ENCODE measurements at regions of chr15 and their contacts with region 1.

Region 1: DNA sequence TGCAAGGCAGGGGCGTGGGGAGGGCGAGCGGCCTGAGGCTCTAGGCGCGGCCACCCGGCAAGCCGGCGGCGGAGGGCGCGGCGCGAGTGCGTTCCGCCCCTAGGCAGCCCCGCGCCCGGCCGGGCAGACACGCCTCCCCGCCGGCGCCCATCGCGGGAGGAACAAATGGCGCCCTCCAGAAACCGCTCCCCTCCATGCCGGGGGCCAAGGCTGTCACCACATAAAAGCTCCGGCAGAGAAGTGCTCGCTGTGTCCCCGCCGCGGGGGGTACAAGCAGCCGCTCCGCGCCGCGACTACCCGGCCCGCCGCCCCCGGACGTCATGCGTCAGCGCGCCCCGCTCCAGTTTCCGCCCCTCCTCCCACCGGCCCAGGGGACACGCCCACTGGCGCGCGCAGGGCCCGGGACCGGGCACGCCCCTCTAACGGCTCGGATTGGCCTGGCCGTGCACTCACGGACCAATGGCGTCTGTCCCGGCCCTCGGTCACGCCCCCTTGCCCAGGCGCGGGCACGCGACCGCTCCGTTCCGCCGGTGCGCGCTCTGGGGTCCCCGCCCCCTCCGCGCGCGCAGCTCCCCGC is 391 bp upstream of the KLF13 start:
- DNase-seq: peak; percentile 93 to 99
- H3K4me3 ChIP-seq: peak overlapping the region; percentile 74 to 90
- H3K27ac ChIP-seq: peak overlapping the region; percentile 95 to 99
- H3K4me1 ChIP-seq: peaks cover 5 to 27% of the 10 kb centered on the region in 2 donors
- H3K27me3 ChIP-seq: no peaks in the 10 kb centered on the region
- CTCF ChIP-seq: no peak

Region 2: GRCh38 chr15:30903497-30904201 is 422.6 kb before region 1 on chr15 and contains the start of gene FAN1:
- intact Hi-C with region 1: loop called (anchors 10 kb)
- DNase-seq: peak; percentile 34 to 92
- H3K4me3 ChIP-seq: peak within 1 kb of the TSS; percentile 90 to 99
- H3K27ac ChIP-seq: peak within 1 kb of the TSS; percentile 61 to 77
- H3K4me1 ChIP-seq: peaks cover 0 to 8% of the 10 kb centered on the region in 2 donors
- H3K27me3 ChIP-seq: no peaks in the 10 kb centered on the region
- CTCF ChIP-seq: no peak
- total RNA-seq, gene FAN1: 12.1 TPM

Region 3: GRCh38 chr15:31215490-31216214 is 110.6 kb before region 1 on chr15:
- intact Hi-C with region 1: loop called (anchors 1 kb)
- DNase-seq: peak; percentile 25 to 86
- H3K4me3 ChIP-seq: peak overlapping the region; percentile 63 to 76
- H3K27ac ChIP-seq: peak overlapping the region; percentile 87 to 91
- H3K4me1 ChIP-seq: peaks cover 10 to 14% of the 10 kb centered on the region in 2 donors
- H3K27me3 ChIP-seq: no peaks in the 10 kb centered on the region
- CTCF ChIP-seq: peak; percentile 83 to 90 (median 88)

Region 4: DNA sequence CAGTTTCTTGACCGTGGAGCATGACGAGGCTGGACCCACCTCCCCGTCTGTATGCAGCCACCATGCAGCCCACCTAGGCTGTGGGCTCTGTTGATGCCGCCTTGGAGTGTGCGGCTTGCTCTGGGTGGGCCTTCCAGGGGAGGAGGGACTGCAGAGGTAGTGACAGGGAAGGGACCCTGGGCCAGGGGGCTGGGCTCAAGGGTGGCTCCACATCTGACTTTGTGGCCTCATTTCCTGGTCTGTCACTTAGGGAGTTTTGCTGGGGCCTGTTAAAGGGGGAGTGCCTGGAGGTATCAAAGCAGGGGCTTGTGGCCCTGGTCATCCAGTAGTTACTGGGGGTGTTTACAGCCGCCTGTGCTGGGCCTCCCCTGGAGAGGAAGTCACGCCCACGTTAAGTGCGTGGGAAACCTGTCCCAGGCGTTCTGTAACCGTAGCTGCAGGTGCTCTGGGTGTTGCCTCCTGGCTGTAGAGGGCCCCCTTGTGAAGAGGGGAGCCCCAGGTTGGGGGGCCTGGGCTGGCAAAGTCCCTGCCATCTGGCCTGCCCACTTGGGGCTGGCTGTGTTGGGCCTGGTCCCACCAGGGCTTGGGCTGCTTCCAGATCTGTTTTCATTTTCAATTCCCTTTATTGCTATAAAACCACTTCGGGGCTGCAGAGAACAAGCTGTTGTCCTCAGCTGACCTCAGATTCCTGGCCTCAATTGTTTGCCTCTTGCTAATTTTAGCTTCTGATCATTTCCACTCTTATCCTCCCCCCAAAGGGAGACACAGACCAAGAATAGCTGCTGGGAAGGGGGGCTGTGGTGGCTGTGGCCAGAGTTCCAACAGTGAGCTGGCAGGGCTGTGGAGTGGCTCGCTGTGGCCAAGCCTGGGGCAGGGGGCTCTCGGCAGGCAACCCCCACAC is 26.9 kb after region 1 on chr15:
- intact Hi-C with region 1: loop called (anchors 1 kb)
- DNase-seq: peak in 1 of 2 donors; percentile 89
- H3K4me3 ChIP-seq: peak overlapping the region in 1 of 2 donors; percentile 25
- H3K27ac ChIP-seq: peak overlapping the region; percentile 68 to 70
- H3K4me1 ChIP-seq: peaks cover 18 to 38% of the 10 kb centered on the region in 2 donors
- H3K27me3 ChIP-seq: no peaks in the 10 kb centered on the region
- CTCF ChIP-seq: no peak

Region 5: GRCh38 chr15:31391687-31392671 is 65.7 kb after region 1 on chr15:
- intact Hi-C with region 1: loop called (anchors 1 kb)
- DNase-seq: peak; percentile 67 to 94
- H3K4me3 ChIP-seq: peak overlapping the region; percentile 68 to 88
- H3K27ac ChIP-seq: peak overlapping the region; percentile 96 to 97
- H3K4me1 ChIP-seq: peaks cover 2 to 20% of the 10 kb centered on the region in 2 donors
- H3K27me3 ChIP-seq: no peaks in the 10 kb centered on the region
- CTCF ChIP-seq: no peak

Region 6: GRCh38 chr15:31442203-31443111 is 116.2 kb after region 1 on chr15:
- intact Hi-C with region 1: loop called (anchors 2 kb)
- DNase-seq: no peak
- H3K4me3 ChIP-seq: no peak overlapping the region
- H3K27ac ChIP-seq: peak overlapping the region; percentile 49 to 70
- H3K4me1 ChIP-seq: peaks cover 7 to 24% of the 10 kb centered on the region in 2 donors
- H3K27me3 ChIP-seq: no peaks in the 10 kb centered on the region
- CTCF ChIP-seq: peak in 2 of 3 experiments; percentile 5 to 10

Region 7: GRCh38 chr15:31870328-31871165 is 544.3 kb after region 1 on chr15:
- intact Hi-C with region 1: loop called (anchors 1 kb)
- DNase-seq: peak; percentile 35 to 87
- H3K4me3 ChIP-seq: peak within 1 kb of the TSS; percentile 74 to 75
- H3K27ac ChIP-seq: peak within 1 kb of the TSS; percentile 63 to 64
- H3K4me1 ChIP-seq: peaks cover 0 to 3% of the 10 kb centered on the region in 2 donors
- H3K27me3 ChIP-seq: no peaks in the 10 kb centered on the region
- CTCF ChIP-seq: no peak